Sigmoid colon (tissue), 7 donors: ENCODE measurements at regions of chrX and their contacts with region 1.

Region 1: GRCh38 chrX:15564981-15565579 is 35.7 kb downstream of the ACE2 start:
- DNase-seq: peak; percentile 64
- H3K4me3 ChIP-seq: no peak overlapping the region
- H3K27ac ChIP-seq: no peak overlapping the region
- H3K4me1 ChIP-seq: no peaks in the 10 kb centered on the region
- H3K27me3 ChIP-seq: no peaks in the 10 kb centered on the region
- CTCF ChIP-seq: peak in 3 of 4 experiments; percentile 13 to 37 (median 14)
- EP300 ChIP-seq: no peak
- POLR2A ChIP-seq: no peak

Region 2: GRCh38 chrX:15349046-15349445 is 216.0 kb before region 1 on chrX:
- intact Hi-C with region 1: loop called (anchors 5 kb)
- DNase-seq: no peak
- H3K4me3 ChIP-seq: no peak overlapping the region
- H3K27ac ChIP-seq: no peak overlapping the region
- H3K4me1 ChIP-seq: no peaks in the 10 kb centered on the region
- H3K27me3 ChIP-seq: no peaks in the 10 kb centered on the region
- CTCF ChIP-seq: peak in 3 of 4 experiments; percentile 12 to 48 (median 26)
- EP300 ChIP-seq: no peak
- POLR2A ChIP-seq: no peak

Region 3: GRCh38 chrX:15468036-15468435 is 97.0 kb before region 1 on chrX:
- intact Hi-C with region 1: loop called (anchors 5 kb)
- DNase-seq: no peak
- H3K4me3 ChIP-seq: no peak overlapping the region
- H3K27ac ChIP-seq: no peak overlapping the region
- H3K4me1 ChIP-seq: peaks cover 0 to 4% (median 0%) of the 10 kb centered on the region in 4 donors
- H3K27me3 ChIP-seq: no peaks in the 10 kb centered on the region
- CTCF ChIP-seq: peak; percentile 12 to 24 (median 17)
- EP300 ChIP-seq: no peak
- POLR2A ChIP-seq: no peak